CD8-positive, alpha-beta memory T cell (primary cell): ENCODE measurements at regions of chr16 and their contacts with region 1.

Region 1: GRCh38 chr16:25051406-25052150 is 36.4 kb upstream of the ARHGAP17 start:
- DNase-seq: no peak
- H3K4me3 ChIP-seq: peak overlapping the region; percentile 32
- H3K4me3 Mint-ChIP-seq: peak overlapping the region; percentile 35 to 84 (median 64)
- H3K27ac ChIP-seq: no peak overlapping the region
- H3K27ac Mint-ChIP-seq: peak overlapping the region; percentile 62 to 99 (median 76)
- H3K4me1 ChIP-seq: peaks cover 39% of the 10 kb centered on the region
- H3K4me1 Mint-ChIP-seq: peaks cover 37 to 52% (median 51%) of the 10 kb centered on the region in 3 donors
- H3K27me3 ChIP-seq: no peaks in the 10 kb centered on the region
- H3K27me3 Mint-ChIP-seq: no peaks in the 10 kb centered on the region

Region 2: GRCh38 chr16:25014500-25015147 is 37.0 kb before region 1 on chr16:
- CTCF ChIA-PET with region 1: interaction called, 5 read pairs
- POLR2A ChIA-PET with region 1: interaction called, 48 read pairs
- DNase-seq: peak; percentile 10 to 49 (median 14)
- H3K4me3 ChIP-seq: peak overlapping the region; percentile 83
- H3K4me3 Mint-ChIP-seq: peak overlapping the region; percentile 85 to 98 (median 97)
- H3K27ac ChIP-seq: peak overlapping the region; percentile 70
- H3K27ac Mint-ChIP-seq: peak overlapping the region; percentile 87 to 99 (median 97)
- H3K4me1 ChIP-seq: peaks cover 63% of the 10 kb centered on the region
- H3K4me1 Mint-ChIP-seq: peaks cover 71 to 87% (median 79%) of the 10 kb centered on the region in 3 donors
- H3K27me3 ChIP-seq: no peaks in the 10 kb centered on the region
- H3K27me3 Mint-ChIP-seq: no peaks in the 10 kb centered on the region

Region 3: DNA sequence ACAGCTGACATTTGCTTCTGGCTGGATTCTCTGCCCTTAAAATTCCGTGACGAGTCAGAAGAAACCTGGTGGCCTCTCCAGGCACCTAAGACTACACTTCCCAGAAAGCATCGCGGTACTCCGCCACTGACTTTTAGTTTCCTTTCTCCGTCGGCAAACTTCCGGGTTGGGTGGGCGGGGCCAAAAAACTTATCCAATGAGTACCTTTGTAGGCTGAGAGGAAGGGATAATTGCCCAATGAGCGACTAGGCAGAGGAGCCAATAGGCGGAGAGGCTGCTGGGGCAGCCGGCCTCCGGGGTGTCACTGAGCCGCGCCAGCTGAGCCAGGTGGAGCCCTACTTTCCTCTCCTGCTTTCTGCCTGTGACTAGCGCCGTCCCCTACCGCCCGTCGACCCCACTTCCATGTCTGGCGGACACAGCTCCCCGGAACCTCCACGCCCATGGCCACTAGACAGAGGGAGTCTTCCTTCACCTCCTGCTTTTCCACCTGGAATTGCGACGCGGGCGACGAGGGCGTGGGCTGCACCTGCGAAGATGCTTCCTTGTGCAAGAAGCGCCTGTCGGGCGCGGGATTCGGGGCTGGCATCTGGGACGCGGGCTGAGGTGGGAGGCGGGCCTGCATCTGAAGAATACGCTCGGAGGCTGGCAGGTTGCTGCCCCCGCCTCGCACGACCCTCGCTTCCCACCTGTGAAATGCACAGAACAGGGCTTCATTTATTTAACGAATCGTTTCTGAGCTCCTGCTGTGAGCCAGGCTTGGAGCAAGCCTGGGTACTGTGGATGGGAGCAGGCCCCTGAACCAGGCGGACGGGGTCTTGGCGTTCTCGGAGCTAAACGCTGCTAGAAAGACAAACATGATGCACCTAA is 19.9 kb before region 1 on chr16:
- CTCF ChIA-PET with region 1: interaction called, 5 read pairs
- POLR2A ChIA-PET with region 1: interaction called, 23 read pairs
- DNase-seq: peak; percentile 88 to 94 (median 92)
- H3K4me3 ChIP-seq: peak overlapping the region; percentile 89
- H3K4me3 Mint-ChIP-seq: peak overlapping the region; percentile 79 to 99 (median 94)
- H3K27ac ChIP-seq: peak overlapping the region; percentile 64
- H3K27ac Mint-ChIP-seq: peak overlapping the region; percentile 61 to 96 (median 94)
- H3K4me1 ChIP-seq: peaks cover 24% of the 10 kb centered on the region
- H3K4me1 Mint-ChIP-seq: peaks cover 19 to 51% (median 37%) of the 10 kb centered on the region in 3 donors
- H3K27me3 ChIP-seq: no peaks in the 10 kb centered on the region
- H3K27me3 Mint-ChIP-seq: peaks cover 0 to 2% of the 10 kb centered on the region in 2 donors

Region 4: DNA sequence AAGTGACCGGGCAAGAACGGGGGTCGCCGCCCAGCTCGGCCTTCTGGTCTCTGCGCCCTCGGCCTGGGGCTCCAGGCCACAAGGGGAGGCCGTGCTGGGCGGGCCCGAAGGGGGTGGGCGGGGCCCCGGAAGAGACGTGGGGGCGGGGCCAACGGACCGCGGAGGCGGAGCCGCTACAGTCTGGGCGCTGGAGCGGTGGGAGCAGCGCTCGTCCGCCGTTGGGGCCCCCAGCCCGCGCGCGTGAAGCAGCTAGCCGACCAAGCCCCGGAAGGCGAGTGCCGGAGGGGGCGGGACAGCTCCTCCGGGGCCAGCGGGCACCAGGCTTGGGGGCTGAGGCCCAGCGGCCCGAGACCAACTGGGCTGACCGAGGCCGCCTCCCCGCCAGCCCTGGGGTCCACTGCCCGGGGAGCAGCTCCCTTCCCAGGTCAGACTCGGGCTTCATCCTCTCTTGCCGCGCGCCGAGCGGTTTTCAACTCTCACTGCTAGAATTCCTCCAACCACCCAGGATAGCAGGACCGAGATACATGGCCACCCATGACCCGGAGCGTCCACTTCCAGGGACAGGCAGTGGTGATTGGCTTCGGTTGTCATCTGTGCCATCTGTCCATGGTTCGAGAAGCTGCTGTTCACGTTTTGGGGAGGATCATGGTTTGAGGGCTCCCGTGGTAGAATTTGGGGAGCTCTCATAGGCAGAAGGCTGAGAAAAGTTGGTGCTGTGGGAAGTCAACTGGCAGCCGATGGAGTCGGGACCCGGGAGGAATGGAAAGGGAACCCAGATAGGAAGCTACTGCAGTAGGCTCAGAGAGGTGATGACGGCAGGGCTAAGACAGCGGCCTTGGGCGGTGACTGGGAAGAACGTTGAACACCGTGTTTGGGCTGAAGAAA is 15.4 kb after region 1 on chr16:
- CTCF ChIA-PET with region 1: interaction called, 6 read pairs
- POLR2A ChIA-PET with region 1: interaction called, 14 read pairs
- DNase-seq: peak; percentile 77 to 91 (median 82)
- H3K4me3 ChIP-seq: peak overlapping the region; percentile 93
- H3K4me3 Mint-ChIP-seq: peak overlapping the region; percentile 76 to 95 (median 87)
- H3K27ac ChIP-seq: peak overlapping the region; percentile 77
- H3K27ac Mint-ChIP-seq: peak overlapping the region; percentile 60 to 97 (median 90)
- H3K4me1 ChIP-seq: peaks cover 46% of the 10 kb centered on the region
- H3K4me1 Mint-ChIP-seq: peaks cover 32 to 47% (median 38%) of the 10 kb centered on the region in 3 donors
- H3K27me3 ChIP-seq: no peaks in the 10 kb centered on the region
- H3K27me3 Mint-ChIP-seq: no peaks in the 10 kb centered on the region

Region 5: DNA sequence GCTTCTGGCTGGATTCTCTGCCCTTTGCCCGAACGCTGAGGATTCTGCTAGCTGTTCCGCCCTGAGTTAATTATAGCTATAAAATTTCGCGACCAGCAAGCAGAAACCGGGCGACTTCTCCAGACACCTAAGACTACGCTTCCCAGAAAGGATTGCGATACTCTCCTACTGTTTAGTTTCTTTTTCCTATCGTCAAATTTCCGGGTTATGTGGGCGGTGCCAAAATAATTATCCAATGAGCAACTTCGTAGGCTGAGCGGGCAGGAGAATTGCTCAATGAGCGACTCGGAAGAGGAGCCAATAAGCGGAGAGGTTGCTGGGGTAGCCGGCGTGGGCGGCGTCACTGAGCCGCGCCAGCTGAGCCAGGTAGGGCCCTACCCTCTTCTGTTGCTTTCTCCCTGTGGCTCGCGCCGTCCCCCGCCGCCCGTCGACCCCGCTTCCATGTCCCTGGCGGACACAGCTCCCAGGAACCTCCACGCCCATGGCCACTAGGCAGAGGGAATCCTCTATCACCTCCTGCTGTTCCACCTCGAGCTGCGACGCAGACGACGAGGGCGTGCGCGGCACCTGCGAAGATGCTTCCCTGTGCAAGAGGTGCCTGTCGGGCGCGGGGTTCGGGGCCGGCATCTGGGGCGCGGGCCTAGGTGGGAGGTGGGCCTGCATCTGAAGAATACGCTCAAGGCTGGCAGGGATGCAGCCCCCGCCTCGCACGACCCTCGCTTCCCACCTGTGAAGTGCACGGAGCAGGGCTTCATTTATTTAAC is 60.0 kb after region 1 on chr16 and contains the start of gene LCMT1:
- CTCF ChIA-PET with region 1: interaction called, 74 read pairs
- POLR2A ChIA-PET with region 1: interaction called, 19 read pairs
- DNase-seq: peak; percentile 82 to 94 (median 93)
- H3K4me3 ChIP-seq: peak within 1 kb of the TSS; percentile 92
- H3K4me3 Mint-ChIP-seq: peak within 1 kb of the TSS; percentile 89 to 97 (median 96)
- H3K27ac ChIP-seq: peak within 1 kb of the TSS; percentile 79
- H3K27ac Mint-ChIP-seq: peak within 1 kb of the TSS; percentile 48 to 98 (median 96)
- H3K4me1 ChIP-seq: peaks cover 36% of the 10 kb centered on the region
- H3K4me1 Mint-ChIP-seq: peaks cover 55 to 77% (median 77%) of the 10 kb centered on the region in 3 donors
- H3K27me3 ChIP-seq: no peaks in the 10 kb centered on the region
- H3K27me3 Mint-ChIP-seq: no peaks in the 10 kb centered on the region
- total RNA-seq, gene LCMT1: 43.6 to 43.8 TPM

Region 6: GRCh38 chr16:25224731-25225319 is 173.2 kb after region 1 on chr16:
- CTCF ChIA-PET with region 1: interaction called, 30 read pairs
- POLR2A ChIA-PET with region 1: no interaction called
- DNase-seq: no peak
- H3K4me3 ChIP-seq: no peak overlapping the region
- H3K4me3 Mint-ChIP-seq: no peak overlapping the region
- H3K27ac ChIP-seq: no peak overlapping the region
- H3K27ac Mint-ChIP-seq: peak overlapping the region in 1 of 8 donors; percentile 3
- H3K4me1 ChIP-seq: no peaks in the 10 kb centered on the region
- H3K4me1 Mint-ChIP-seq: no peaks in the 10 kb centered on the region
- H3K27me3 ChIP-seq: no peaks in the 10 kb centered on the region
- H3K27me3 Mint-ChIP-seq: no peaks in the 10 kb centered on the region